ENCODE measurements at regions of chr15 and their contacts with region 1.

Region 1: DNA sequence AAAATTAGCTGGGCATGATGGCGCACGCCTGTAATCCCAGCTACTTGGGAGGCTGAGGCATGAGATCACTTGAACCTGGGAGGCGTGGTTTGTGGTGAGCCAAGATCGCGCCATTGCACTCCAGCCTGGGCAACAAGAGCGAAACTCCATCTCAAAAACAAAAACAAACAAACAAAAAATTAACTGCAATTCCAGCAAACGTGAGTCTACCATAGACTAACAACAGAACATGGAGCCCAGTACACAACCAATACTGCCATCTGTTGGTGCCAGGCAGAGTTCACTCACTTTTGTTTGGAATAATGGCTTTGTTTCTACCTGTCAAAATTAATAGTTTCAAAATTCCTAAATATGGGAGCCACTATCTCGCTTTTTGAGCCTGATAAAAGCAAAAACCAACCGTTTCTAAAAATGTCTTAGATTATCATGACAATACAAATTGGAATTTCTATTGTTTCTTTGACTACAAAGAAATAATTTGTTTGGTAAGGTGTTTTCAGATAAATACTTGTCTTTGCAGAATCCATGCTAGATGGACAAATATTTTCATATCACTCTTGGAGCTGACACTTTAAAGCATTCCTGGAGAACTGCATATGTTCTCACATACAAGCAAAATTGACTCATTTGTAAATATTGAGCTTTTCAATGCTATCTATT is 45.0 kb downstream of the GPR176 start:
- DNase-seq: peak; percentile 46 to 67 (median 60)
- H3K4me3 ChIP-seq: no peak overlapping the region
- H3K27ac ChIP-seq: no peak overlapping the region
- H3K4me1 ChIP-seq: no peaks in the 10 kb centered on the region
- H3K27me3 ChIP-seq: no peaks in the 10 kb centered on the region

Region 2: GRCh38 chr15:39887832-39888231 is 12.8 kb after region 1 on chr15:
- CTCF ChIA-PET with region 1: interaction called, 12 read pairs
- POLR2A ChIA-PET with region 1: no interaction called
- DNase-seq: peak; percentile 15 to 33 (median 18)
- H3K4me3 ChIP-seq: no peak overlapping the region
- H3K27ac ChIP-seq: no peak overlapping the region
- H3K4me1 ChIP-seq: no peaks in the 10 kb centered on the region
- H3K27me3 ChIP-seq: no peaks in the 10 kb centered on the region

Measured in common myeloid progenitor, CD34-positive (primary cell).